CD4-positive, alpha-beta T cell (primary cell): ENCODE measurements at regions of chr18 and their contacts with region 1.

Region 1: GRCh38 chr18:74337155-74337911 is 21.7 kb downstream of the C18orf63 start:
- DNase-seq: no peak
- ATAC-seq: no peak
- H3K4me3 ChIP-seq: no peak overlapping the region
- H3K4me3 Mint-ChIP-seq: no peak overlapping the region
- H3K27ac ChIP-seq: no peak overlapping the region
- H3K27ac Mint-ChIP-seq: no peak overlapping the region
- H3K4me1 ChIP-seq: no peaks in the 10 kb centered on the region
- H3K4me1 Mint-ChIP-seq: no peaks in the 10 kb centered on the region
- H3K27me3 ChIP-seq: peaks cover 0 to 8% of the 10 kb centered on the region in 2 experiments
- H3K27me3 Mint-ChIP-seq: peaks cover 10% of the 10 kb centered on the region
- CTCF ChIP-seq: no peak

Region 2: GRCh38 chr18:74242438-74243096 is 94.8 kb before region 1 on chr18:
- CTCF ChIA-PET with region 1: interaction called, 4 read pairs
- POLR2A ChIA-PET with region 1: no interaction called
- intact Hi-C with region 1: loop called in 1 of 2 experiments (anchors 5 kb)
- DNase-seq: no peak
- ATAC-seq: no peak
- H3K4me3 ChIP-seq: no peak overlapping the region
- H3K4me3 Mint-ChIP-seq: no peak overlapping the region
- H3K27ac ChIP-seq: no peak overlapping the region
- H3K27ac Mint-ChIP-seq: no peak overlapping the region
- H3K4me1 ChIP-seq: no peaks in the 10 kb centered on the region
- H3K4me1 Mint-ChIP-seq: no peaks in the 10 kb centered on the region
- H3K27me3 ChIP-seq: peaks cover 0 to 3% of the 10 kb centered on the region in 2 experiments
- H3K27me3 Mint-ChIP-seq: peaks cover 8% of the 10 kb centered on the region
- CTCF ChIP-seq: no peak

Region 3: DNA sequence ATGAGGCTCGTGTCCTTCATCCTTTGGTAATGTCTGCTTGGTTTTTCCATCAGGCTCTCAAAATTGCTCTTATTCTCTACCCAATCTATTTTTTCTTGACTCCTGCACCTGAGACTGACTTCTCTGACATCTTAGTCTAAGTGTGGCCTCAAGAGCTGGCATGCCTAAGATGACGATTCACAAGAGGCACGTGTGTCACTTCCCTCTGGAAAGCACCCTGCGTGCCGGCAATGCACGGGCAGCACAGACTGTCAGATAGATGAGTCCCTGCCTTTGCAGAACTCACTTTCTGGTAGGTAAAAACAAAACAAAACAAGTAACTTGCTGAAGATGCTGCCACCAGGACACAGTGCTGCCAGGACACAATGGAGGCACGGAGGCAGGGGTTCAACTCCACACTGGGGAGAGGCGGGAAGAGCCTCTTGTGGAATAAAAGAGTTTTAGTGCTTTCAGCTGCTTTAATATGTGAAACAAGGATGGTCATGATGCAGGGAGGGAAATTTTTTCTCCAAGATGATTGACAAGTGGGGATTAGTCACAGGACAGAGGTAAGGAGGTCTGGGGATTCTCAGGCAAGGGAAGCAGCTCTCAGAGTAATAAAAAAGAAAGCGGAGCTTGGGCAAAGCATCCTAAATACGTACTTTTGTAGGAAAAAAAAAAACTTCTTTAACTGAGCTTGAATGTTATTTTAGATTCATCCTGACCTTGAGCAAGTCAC is 72.9 kb before region 1 on chr18:
- CTCF ChIA-PET with region 1: no interaction called
- POLR2A ChIA-PET with region 1: no interaction called
- intact Hi-C with region 1: no loop called
- DNase-seq: peak in 2 of 14 experiments; percentile 17 to 32
- ATAC-seq: no peak
- H3K4me3 ChIP-seq: no peak overlapping the region
- H3K4me3 Mint-ChIP-seq: no peak overlapping the region
- H3K27ac ChIP-seq: no peak overlapping the region
- H3K27ac Mint-ChIP-seq: no peak overlapping the region
- H3K4me1 ChIP-seq: no peaks in the 10 kb centered on the region
- H3K4me1 Mint-ChIP-seq: no peaks in the 10 kb centered on the region
- H3K27me3 ChIP-seq: no peaks in the 10 kb centered on the region
- H3K27me3 Mint-ChIP-seq: no peaks in the 10 kb centered on the region
- CTCF ChIP-seq: no peak